Common myeloid progenitor, CD34-positive (primary cell): ENCODE measurements at regions of chr19 and their contacts with region 1.

Region 1: DNA sequence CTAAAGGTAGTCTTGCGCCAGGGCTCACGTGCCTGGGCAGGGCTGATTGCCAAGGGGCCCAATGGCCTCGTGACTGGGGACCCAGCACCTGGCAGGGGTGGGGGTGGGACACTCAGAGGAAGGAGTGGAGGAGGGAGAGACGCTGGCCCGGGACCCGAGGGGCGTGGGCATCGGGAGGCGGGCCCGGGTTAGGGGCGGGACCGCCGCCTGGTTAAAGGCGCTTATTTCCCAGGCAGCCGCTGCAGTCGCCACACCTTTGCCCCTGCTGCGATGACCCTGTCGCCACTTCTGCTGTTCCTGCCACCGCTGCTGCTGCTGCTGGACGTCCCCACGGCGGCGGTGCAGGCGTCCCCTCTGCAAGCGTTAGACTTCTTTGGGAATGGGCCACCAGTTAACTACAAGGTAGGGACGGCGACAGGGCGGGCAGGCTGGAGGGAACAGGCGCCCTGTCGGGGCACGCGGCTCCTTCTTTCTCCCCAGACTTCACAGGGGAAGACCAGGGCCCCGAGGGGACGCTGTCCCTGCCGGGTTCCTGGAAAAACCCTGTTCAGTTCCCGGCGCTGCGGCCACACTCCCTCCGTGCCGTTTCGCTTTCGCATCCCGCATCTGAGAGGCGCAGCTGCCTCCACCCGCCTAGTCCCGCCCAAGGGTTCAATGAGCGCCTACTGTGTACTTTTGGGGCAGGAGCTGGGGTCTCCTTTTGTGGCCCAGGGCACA is at the start of gene IFI30:
- DNase-seq: peak; percentile 77 to 89 (median 84)
- H3K4me3 ChIP-seq: peak within 1 kb of the TSS; percentile 50 to 91 (median 79)
- H3K27ac ChIP-seq: peak within 1 kb of the TSS in 1 of 2 experiments; percentile 54
- H3K4me1 ChIP-seq: peaks cover 0 to 45% (median 30%) of the 10 kb centered on the region in 4 experiments
- H3K27me3 ChIP-seq: peaks cover 0 to 3% (median 0%) of the 10 kb centered on the region in 5 experiments

Region 2: DNA sequence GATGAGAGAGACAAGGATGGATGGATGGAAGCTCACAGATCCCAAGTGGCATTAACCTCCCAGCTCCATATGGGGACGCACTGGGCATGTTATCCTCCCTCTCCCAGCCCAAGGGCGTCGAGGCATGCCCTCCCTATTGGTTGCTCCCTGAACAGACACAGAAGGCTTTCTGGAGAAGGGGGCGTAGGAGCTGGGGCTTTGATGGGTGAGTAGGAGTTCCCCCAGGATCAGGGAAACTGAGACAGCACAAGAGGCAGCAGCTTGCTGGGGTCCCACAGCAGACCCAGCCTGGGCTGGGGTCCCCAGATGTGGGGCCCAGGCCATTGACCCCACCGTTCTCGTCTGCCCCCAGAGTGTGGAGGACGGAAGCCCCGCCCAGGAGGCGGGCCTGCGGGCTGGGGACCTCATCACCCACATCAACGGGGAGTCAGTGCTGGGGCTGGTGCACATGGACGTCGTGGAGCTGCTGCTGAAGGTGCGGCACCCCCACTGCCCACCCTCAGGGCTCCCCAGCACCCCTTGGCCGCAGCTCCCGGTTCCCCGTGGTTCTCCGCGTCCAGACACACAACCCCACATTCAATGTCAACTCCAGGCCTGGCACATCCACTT is 28.2 kb before region 1 on chr19:
- CTCF ChIA-PET with region 1: no interaction called
- POLR2A ChIA-PET with region 1: no interaction called
- DNase-seq: no peak
- H3K4me3 ChIP-seq: no peak overlapping the region
- H3K27ac ChIP-seq: no peak overlapping the region
- H3K4me1 ChIP-seq: no peaks in the 10 kb centered on the region
- H3K27me3 ChIP-seq: no peaks in the 10 kb centered on the region

Region 3: GRCh38 chr19:18160971-18161635 is 12.6 kb before region 1 on chr19:
- CTCF ChIA-PET with region 1: interaction called, 18 read pairs
- POLR2A ChIA-PET with region 1: no interaction called
- DNase-seq: peak; percentile 65 to 71 (median 70)
- H3K4me3 ChIP-seq: peak overlapping the region in 5 of 7 experiments; percentile 11 to 57 (median 31)
- H3K27ac ChIP-seq: peak overlapping the region in 1 of 2 experiments; percentile 61
- H3K4me1 ChIP-seq: peaks cover 0 to 34% (median 25%) of the 10 kb centered on the region in 4 experiments
- H3K27me3 ChIP-seq: no peaks in the 10 kb centered on the region

Region 4: DNA sequence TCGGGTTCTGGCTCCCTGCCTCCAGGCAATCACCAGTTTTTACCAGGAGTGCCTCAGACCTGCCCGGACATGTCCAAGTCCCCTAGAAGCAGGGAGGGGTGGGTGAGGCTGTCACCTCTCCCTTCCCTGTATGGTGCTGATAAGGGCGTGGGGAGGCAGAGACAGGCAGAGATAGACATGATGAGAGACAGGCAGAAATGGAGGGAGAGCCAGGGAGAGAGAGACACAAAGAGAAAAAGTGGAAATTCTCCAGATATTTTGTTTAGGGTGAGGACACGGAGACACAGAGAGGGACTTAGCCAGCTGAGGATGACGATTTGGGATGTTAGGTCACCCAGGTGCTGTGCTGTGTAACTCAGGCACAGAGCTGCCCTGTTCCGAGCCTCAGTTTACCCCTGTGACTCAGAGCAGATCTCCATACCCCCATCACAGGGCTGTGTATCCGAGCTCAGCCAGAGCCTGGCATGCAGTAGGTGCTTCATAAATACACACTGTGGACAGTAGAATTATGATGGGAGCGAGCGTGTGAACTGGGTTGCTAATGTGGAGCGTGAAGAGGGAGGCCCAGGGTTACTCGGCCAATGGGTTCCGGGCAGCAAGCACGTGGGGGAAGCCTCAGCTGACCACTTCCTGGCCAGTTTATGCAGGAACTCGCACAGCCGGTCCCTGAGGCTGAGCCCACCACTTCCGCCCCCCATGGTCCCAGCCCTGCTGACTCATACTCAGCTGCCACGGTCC is 200.3 kb after region 1 on chr19:
- CTCF ChIA-PET with region 1: no interaction called
- POLR2A ChIA-PET with region 1: no interaction called
- DNase-seq: peak; percentile 80 to 97 (median 95)
- H3K4me3 ChIP-seq: peak overlapping the region in 6 of 7 experiments; percentile 5 to 57 (median 38)
- H3K27ac ChIP-seq: peak overlapping the region; percentile 61 to 90
- H3K4me1 ChIP-seq: peaks cover 4 to 45% (median 30%) of the 10 kb centered on the region in 4 experiments
- H3K27me3 ChIP-seq: no peaks in the 10 kb centered on the region